Colonic mucosa (tissue), 4 donors: ENCODE measurements at regions of chr19 and their contacts with region 1.

Region 1: DNA sequence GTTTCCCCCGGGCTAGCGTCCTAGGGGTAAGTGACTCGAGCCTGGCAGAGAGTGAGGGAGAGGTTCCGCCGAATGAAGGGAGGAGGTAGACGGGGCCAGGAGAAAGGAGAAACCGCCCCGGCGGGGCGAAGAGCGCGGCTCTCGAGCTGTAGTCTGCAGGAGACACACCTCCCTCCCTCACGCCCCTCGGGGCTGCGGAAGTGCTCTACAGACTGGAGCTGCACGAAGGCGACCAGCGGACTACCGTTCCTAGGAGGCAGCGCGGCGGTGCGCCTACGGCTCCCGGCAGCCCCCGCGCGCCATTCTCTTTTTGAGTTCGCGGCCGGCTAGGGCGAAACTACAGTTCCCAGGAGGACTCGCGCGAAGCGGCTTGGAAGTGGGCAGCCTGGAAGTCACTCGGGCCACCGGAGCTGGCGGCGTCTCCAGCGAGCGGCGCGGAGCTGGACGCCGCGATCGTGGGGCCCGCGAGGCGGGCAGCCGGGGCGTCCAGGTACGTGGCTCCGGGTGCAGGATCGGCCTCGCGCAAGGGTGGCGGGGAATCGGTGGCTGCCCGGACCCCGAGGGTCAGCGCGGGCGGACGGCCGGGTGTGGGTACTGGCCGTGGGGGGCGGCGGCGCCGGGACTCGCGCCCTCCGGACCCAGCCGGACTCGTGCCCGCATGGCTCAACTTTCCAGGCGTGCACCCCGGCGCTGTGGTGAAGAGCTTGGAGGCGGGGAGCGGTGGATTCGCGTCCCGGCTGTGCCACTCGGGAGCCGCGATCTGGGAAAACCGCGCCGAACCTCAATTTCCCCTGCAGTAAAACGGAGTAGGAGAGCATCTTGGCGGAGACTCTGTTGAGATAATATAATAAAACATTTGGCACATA is at the start of gene SIPA1L3:
- DNase-seq: peak; percentile 96
- H3K4me3 ChIP-seq: peak within 1 kb of the TSS; percentile 98
- H3K27ac ChIP-seq: peak within 1 kb of the TSS; percentile 76
- H3K4me1 ChIP-seq: no peaks in the 10 kb centered on the region
- H3K27me3 ChIP-seq: no peaks in the 10 kb centered on the region
- CTCF ChIP-seq: no peak
- total RNA-seq, gene SIPA1L3: 98.6 to 113 TPM

Region 2: DNA sequence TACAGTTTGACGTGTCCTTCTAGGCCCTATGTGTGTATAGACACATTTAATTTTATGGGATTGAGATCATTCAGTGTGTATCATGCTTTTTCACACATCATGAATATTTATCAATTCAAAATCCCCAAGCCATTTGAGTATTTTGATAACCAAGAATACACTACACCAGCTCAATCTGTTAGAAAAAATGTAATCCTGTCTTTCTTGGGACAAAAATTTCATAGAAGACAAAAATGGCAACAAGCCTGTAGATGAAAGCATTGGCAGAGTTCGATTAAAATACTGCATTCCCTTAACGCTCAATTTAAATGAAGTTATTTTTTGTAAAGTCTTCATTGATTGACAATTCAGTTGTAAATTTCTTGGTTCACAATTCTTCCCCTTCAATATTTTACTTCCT is 42.6 kb before region 1 on chr19:
- intact Hi-C with region 1: no loop called
- DNase-seq: no peak
- H3K4me3 ChIP-seq: no peak overlapping the region
- H3K27ac ChIP-seq: no peak overlapping the region
- H3K4me1 ChIP-seq: no peaks in the 10 kb centered on the region
- H3K27me3 ChIP-seq: no peaks in the 10 kb centered on the region
- CTCF ChIP-seq: no peak

Region 3: GRCh38 chr19:37979547-37980082 is 72.5 kb after region 1 on chr19:
- intact Hi-C with region 1: loop called (anchors 10 kb)
- DNase-seq: peak; percentile 42
- H3K4me3 ChIP-seq: no peak overlapping the region
- H3K27ac ChIP-seq: no peak overlapping the region
- H3K4me1 ChIP-seq: peaks cover 6% of the 10 kb centered on the region
- H3K27me3 ChIP-seq: no peaks in the 10 kb centered on the region
- CTCF ChIP-seq: no peak

Region 4: DNA sequence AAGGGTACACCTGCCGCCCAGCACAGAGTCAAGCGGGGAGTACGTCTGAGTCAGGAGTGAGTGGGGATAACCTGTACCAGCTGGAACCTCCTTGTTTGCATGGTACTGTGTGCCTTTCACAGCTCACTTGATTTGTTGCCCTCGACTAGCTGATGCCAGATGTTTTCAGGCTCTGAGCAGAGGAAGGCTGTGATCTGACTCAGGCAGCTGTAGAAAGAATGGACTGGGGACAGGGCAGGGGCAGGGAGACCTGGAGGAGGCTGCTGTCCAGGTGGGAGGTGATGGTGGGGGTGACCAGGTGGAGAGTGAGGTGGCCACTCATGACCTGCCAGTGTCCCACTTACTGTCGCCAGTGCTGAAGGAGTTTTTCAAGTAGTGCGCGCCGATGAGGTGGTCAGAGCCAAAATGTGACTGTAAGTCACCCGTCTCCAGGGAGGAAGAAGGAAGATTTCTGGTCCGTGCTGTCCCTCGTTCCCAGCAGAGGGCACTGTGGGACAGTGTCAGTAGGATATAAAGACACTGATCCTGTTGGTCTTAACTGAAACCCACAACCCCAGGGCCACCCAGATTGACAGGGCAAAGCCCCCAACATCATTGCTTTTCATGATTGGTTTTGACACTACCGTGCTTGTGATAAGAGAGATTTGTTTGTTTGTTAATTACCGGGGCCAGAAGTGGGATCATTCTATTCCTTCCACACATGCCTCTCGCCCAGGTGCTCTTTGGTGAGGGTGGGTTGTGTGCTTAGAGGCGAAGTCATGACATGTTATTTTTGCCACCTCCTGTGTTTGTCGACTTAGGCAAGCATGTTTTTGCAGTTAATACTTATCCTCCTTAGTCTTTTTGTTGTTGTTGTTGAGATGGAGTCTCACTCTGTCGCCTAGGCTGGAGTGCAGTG is 188.6 kb after region 1 on chr19:
- intact Hi-C with region 1: loop called (anchors 5 kb)
- DNase-seq: peak; percentile 74
- H3K4me3 ChIP-seq: no peak overlapping the region
- H3K27ac ChIP-seq: no peak overlapping the region
- H3K4me1 ChIP-seq: no peaks in the 10 kb centered on the region
- H3K27me3 ChIP-seq: no peaks in the 10 kb centered on the region
- CTCF ChIP-seq: peak; percentile 59

Region 5: DNA sequence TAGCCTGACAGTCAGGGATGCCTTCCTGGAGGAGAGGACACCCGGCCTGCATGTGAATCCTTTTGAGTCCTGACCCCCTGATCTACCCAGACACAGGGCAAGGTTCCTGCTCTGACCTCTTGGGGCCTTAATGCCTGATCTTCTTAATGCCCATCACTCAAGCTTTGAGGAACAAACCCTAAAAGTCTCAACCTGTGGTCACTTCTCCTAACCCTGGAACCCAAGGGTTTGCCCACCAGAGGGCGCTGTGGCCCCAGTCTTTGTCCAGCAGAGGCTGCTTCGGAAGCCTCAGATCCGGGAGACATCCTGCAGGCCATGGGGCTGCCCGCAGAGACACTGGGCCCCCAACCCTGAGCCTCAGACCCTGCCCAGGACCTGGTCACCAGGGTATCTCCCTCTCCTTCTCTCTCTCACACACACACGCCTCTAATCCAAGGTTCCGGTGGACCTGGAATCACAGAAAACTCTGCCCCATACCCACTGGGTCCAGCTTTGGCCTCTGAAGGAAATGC is 326.7 kb after region 1 on chr19:
- intact Hi-C with region 1: loop called (anchors 5 kb)
- DNase-seq: peak; percentile 85
- H3K4me3 ChIP-seq: no peak overlapping the region
- H3K27ac ChIP-seq: no peak overlapping the region
- H3K4me1 ChIP-seq: peaks cover 5% of the 10 kb centered on the region
- H3K27me3 ChIP-seq: peaks cover 12% of the 10 kb centered on the region
- CTCF ChIP-seq: peak; percentile 77

Region 6: GRCh38 chr19:38319421-38320258 is 412.5 kb after region 1 on chr19 and contains the start of gene KCNK6:
- intact Hi-C with region 1: loop called (anchors 10 kb)
- DNase-seq: peak; percentile 90
- H3K4me3 ChIP-seq: peak within 1 kb of the TSS; percentile 91
- H3K27ac ChIP-seq: peak within 1 kb of the TSS; percentile 83
- H3K4me1 ChIP-seq: peaks cover 8% of the 10 kb centered on the region
- H3K27me3 ChIP-seq: no peaks in the 10 kb centered on the region
- CTCF ChIP-seq: no peak
- total RNA-seq, gene KCNK6: 19.8 to 23.4 TPM